Activated CD4-positive, alpha-beta memory T cell treated with anti-CD3 and anti-CD28 coated beads, Interleukin-2, amount 10 ng/mL, durations not matched to agents 7 days and 5 days (primary cell): ENCODE measurements at regions of chr14 and their contacts with region 1.

Region 1: DNA sequence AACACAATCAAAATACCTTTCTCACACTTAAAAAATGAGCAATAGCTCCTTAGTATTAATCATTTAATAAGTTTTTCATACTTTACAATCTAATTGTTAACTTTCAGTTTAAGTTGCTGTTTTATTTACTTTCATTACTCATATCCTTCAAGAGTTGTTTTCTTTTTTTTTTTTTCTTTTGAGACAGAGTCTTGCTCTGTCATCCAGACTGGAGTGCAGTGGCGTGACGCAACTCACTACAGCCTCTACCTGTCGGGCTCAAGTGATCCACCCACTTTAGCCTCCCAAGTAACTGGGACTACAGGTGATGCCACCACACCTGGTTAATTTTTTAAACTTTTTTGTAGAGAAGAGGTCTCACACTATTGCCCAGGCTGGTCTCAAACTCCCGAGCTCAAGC is 16.1 kb downstream of the ZBTB1 start:
- DNase-seq: no peak
- H3K4me3 Mint-ChIP-seq: no peak overlapping the region
- H3K27ac Mint-ChIP-seq: no peak overlapping the region
- H3K4me1 Mint-ChIP-seq: peaks cover 25% of the 10 kb centered on the region
- H3K27me3 Mint-ChIP-seq: no peaks in the 10 kb centered on the region

Region 2: GRCh38 chr14:64540208-64541157 is 19.8 kb after region 1 on chr14 and contains the start of gene HSPA2:
- CTCF ChIA-PET with region 1: interaction called, 9 read pairs
- POLR2A ChIA-PET with region 1: interaction called, 10 read pairs
- DNase-seq: peak; percentile 97
- H3K4me3 Mint-ChIP-seq: peak within 1 kb of the TSS; percentile 94
- H3K27ac Mint-ChIP-seq: peak within 1 kb of the TSS; percentile 91
- H3K4me1 Mint-ChIP-seq: peaks cover 36% of the 10 kb centered on the region
- H3K27me3 Mint-ChIP-seq: peaks cover 45% of the 10 kb centered on the region
- total RNA-seq, gene HSPA2: 6.8 to 7.1 TPM

Region 3: DNA sequence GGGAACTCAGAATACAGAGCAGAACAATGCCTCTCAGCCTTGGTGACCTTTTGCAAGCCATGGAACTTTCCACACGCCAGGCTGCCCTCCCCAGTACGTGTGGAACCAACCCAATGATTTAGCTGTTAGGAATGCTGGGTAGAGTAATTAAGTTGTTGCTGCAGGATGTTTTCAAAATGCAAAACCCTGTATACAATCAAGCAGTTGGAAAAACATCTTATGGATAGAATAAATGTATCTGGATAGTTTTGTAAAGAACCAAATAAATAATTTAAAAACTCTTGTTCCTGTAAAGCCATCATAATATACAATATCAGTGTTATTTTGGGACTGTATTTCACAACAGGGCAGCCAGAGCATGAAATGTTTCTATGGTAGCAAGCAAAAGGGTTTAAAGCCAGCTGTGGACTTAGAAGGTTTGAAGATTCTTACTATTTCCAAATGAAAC is 48.5 kb after region 1 on chr14:
- CTCF ChIA-PET with region 1: no interaction called
- POLR2A ChIA-PET with region 1: no interaction called
- DNase-seq: no peak
- H3K4me3 Mint-ChIP-seq: no peak overlapping the region
- H3K27ac Mint-ChIP-seq: no peak overlapping the region
- H3K4me1 Mint-ChIP-seq: peaks cover 3% of the 10 kb centered on the region
- H3K27me3 Mint-ChIP-seq: peaks cover 18% of the 10 kb centered on the region